Right cardiac atrium (tissue), 5 donors: ENCODE measurements at regions of chr19 and their contacts with region 1.

Region 1: DNA sequence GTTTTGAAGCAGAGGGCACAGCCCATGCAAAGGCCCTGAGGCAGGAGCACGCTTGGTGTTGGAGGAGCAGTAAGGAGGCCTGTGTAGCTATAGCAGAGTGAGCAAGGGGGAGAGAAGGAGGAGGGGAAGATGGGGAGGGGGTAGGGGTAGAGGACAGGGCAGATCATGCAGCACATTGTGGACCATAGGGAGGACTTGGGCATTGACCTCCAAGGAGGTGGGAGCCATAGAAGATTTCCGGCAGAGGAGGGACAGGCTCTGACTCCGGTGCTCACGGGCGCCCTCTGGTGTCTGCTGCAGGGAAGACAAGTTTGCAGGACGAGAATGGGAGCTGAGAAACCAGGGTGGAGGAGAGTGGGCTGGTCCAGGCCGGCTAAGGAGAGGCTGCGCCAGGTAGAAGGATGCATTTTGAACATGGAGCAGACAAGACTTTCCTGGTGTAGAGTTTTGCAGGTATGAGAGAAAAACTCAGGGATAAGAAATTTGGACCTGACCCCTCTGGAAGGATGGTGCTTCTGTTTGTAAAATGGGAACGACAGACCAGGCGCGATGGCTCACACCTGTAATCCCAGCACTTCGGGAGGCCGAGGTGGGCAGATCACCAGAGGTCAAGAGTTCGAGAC is 13.7 kb upstream of the CREB3L3 start:
- DNase-seq: peak; percentile 72 to 92 (median 89)
- ATAC-seq: peak; percentile 82 to 90
- H3K4me3 ChIP-seq: no peak overlapping the region
- H3K27ac ChIP-seq: no peak overlapping the region
- H3K4me1 ChIP-seq: no peaks in the 10 kb centered on the region
- H3K27me3 ChIP-seq: no peaks in the 10 kb centered on the region

Region 2: DNA sequence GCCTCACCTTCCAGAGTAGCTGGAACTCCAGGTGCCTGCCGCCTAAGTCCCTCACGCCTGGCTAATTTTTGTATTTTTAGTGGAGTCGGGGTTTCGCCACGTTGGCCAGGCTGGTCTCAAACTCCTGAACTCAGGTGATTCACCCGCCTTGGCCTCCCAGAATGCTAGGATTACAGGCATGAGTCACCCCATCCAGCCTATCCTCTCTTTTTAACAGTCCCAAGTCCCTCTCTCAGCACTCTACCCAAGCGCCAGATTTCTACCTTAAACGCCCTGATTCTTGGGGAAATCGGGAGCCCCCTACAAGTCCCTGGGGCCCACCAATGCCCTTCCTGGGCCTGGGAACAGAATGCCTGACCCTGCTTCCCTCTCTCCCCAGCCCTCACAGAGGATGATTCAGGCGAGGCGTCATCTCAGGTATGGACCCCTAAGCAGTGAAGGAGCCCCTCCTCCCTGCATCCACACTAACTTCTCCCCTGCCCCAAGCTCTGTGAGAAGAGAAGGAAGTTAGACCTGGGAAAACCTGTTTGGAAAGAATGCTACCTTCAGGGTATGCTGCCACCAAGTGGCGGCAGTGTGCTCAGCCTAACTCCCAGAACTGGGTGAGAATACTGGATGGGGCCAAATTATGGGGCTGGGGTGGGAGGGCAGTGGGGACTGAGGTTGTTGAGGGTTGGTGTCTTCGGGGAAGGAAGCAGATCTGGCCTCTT is 68.8 kb after region 1 on chr19:
- intact Hi-C with region 1: loop called in 1 of 4 experiments (anchors 10 kb)
- DNase-seq: peak in 1 of 3 donors; percentile 21
- ATAC-seq: no peak
- H3K4me3 ChIP-seq: no peak overlapping the region
- H3K27ac ChIP-seq: no peak overlapping the region
- H3K4me1 ChIP-seq: no peaks in the 10 kb centered on the region
- H3K27me3 ChIP-seq: no peaks in the 10 kb centered on the region